B cell (primary cell): ENCODE measurements at regions of chr19 and their contacts with region 1.

Region 1: DNA sequence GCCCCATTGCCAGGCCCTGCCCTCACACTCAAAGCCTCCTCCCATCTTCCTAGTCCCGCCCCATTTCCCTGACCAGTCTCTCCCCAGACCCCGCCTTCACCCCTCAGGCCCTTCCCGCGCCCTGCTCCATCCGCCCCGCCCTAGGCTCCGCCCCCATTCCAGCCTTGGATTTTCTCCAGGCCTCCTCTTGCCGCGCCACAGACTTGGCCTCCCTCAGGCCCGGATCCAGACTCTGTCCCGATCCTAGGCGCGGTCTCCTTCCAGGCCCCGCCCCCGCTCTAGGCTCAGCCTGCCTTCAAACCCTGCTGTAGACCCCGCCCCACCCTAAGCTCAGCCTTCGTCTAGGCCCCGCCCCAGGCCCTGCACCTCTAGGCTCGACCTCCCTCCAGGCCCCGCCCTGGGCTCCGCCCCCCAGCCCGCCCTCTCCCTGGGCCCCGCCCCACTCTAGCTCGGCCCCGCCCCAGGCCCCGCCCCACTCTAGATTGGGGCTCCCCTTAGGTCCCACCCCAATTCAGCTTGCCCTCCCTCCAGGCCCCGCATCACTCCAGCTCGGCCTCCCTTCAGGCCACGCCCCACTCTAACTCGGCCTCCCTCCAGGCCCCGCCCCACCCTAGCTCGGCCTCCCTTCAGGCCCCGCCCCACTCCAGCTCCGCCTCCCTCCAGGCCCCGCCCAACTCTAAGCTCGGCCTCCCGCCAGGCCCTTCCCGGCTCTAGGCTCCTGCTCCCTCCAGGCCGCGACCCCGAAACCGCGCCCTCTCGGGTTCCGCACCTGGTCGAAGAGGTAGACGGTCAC is 18.5 kb downstream of the LMTK3 start:
- DNase-seq: peak; percentile 82
- ATAC-seq: peak; percentile 69
- H3K4me3 ChIP-seq: peak overlapping the region in 4 of 5 experiments; percentile 22 to 56 (median 48)
- H3K4me3 Mint-ChIP-seq: peak overlapping the region; percentile 69
- H3K27ac ChIP-seq: no peak overlapping the region
- H3K27ac Mint-ChIP-seq: no peak overlapping the region
- H3K4me1 ChIP-seq: peaks cover 51 to 53% of the 10 kb centered on the region in 2 donors
- H3K4me1 Mint-ChIP-seq: peaks cover 35% of the 10 kb centered on the region
- H3K27me3 ChIP-seq: peaks cover 0 to 57% (median 28%) of the 10 kb centered on the region in 4 experiments
- H3K27me3 Mint-ChIP-seq: peaks cover 35% of the 10 kb centered on the region
- CTCF ChIP-seq: no peak

Region 2: GRCh38 chr19:48085904-48086864 is 406.9 kb before region 1 on chr19:
- CTCF ChIA-PET with region 1: no interaction called
- POLR2A ChIA-PET with region 1: no interaction called
- intact Hi-C with region 1: no loop called
- DNase-seq: no peak
- ATAC-seq: no peak
- H3K4me3 ChIP-seq: no peak overlapping the region
- H3K4me3 Mint-ChIP-seq: no peak overlapping the region
- H3K27ac ChIP-seq: no peak overlapping the region
- H3K27ac Mint-ChIP-seq: no peak overlapping the region
- H3K4me1 ChIP-seq: no peaks in the 10 kb centered on the region
- H3K4me1 Mint-ChIP-seq: peaks cover 2% of the 10 kb centered on the region
- H3K27me3 ChIP-seq: no peaks in the 10 kb centered on the region
- H3K27me3 Mint-ChIP-seq: peaks cover 10% of the 10 kb centered on the region
- CTCF ChIP-seq: no peak

Region 3: DNA sequence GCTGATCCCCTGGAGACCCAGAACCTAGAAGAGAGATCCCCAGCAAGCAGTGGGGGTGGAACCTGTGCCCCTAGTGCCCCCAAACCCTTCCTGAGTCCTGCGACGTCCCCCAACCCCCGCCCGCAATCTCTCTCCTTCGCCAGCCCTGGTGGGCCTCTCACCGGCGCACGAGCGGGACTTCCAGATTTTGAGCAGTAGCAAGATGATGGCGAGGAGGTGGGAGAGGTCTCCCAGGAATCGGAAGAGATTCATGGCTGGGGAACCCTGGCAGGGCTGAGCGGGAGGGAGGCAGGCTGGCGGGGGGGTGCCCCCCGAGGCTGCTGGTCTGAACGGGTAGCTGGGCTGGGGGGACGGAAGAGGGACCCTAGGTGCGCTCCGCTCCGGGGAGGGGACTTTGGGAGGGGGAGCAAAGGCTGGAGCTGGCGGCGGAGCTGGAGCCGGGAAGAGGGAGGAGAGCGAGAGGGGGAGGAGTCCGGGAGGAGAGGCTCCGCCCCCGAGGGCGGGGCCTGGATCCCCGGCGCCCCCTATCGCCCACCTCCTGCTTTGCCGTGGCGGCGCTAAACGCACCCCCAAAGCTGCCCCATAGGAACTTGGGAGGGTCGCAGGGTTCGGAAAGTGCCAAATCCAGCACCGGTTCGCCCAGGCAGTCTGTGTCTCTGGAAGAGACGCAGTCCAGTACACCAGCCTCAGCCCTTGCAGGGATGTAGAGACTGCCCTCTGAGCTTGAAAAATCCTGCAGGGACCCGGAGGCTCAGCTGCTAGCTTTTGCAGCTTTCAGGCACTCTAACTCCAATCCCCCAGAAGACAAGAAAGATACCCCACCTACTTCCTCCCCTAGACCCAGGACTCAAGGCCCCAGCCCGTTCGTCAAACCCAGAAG is 101.8 kb before region 1 on chr19 and contains the start of gene KDELR1:
- CTCF ChIA-PET with region 1: interaction called, 3 read pairs
- POLR2A ChIA-PET with region 1: no interaction called
- intact Hi-C with region 1: loop called (anchors 10 kb)
- DNase-seq: peak; percentile 86
- ATAC-seq: peak; percentile 88
- H3K4me3 ChIP-seq: peak within 1 kb of the TSS; percentile 71 to 93 (median 85)
- H3K4me3 Mint-ChIP-seq: peak within 1 kb of the TSS; percentile 95
- H3K27ac ChIP-seq: peak within 1 kb of the TSS; percentile 79 to 80
- H3K27ac Mint-ChIP-seq: peak within 1 kb of the TSS; percentile 92
- H3K4me1 ChIP-seq: peaks cover 39 to 45% of the 10 kb centered on the region in 2 donors
- H3K4me1 Mint-ChIP-seq: peaks cover 24% of the 10 kb centered on the region
- H3K27me3 ChIP-seq: peaks cover 0 to 39% (median 23%) of the 10 kb centered on the region in 4 experiments
- H3K27me3 Mint-ChIP-seq: peaks cover 25% of the 10 kb centered on the region
- CTCF ChIP-seq: peak; percentile 88
- total RNA-seq, gene KDELR1: 60.5 and 62.7 TPM in 2 replicates

Region 4: DNA sequence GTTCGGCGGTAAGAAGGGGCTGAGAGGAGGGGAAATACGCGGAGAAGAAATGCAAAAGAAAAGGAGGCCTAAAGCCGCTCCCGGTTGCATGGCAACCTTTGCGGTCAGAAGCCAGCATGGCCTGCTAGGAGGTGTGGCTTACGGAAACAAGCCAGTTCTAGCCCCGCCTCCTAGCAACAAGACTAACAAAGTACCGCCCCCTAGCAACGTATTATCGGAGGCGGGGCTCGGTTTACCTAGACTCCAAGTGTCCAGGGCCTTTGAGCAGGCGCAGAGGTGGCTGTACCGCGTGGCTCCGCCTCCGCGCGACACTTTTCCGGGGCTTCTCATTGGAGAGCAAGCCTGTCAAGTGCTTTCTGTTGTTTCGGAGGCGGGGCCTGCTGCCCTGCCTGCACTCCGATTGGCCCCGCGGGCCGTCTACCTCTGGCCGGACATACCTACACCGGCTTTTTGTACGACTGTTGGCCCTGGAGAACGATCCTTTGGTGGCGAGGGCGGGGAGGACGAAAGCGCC is 24.3 kb before region 1 on chr19:
- CTCF ChIA-PET with region 1: interaction called, 6 read pairs
- POLR2A ChIA-PET with region 1: no interaction called
- intact Hi-C with region 1: loop called (anchors 1 kb)
- DNase-seq: peak; percentile 100
- ATAC-seq: peak; percentile 87
- H3K4me3 ChIP-seq: peak overlapping the region; percentile 8 to 90 (median 83)
- H3K4me3 Mint-ChIP-seq: peak overlapping the region; percentile 92
- H3K27ac ChIP-seq: peak overlapping the region; percentile 52 to 84
- H3K27ac Mint-ChIP-seq: peak overlapping the region; percentile 89
- H3K4me1 ChIP-seq: peaks cover 11 to 15% of the 10 kb centered on the region in 2 donors
- H3K4me1 Mint-ChIP-seq: peaks cover 17% of the 10 kb centered on the region
- H3K27me3 ChIP-seq: peaks cover 0 to 3% (median 0%) of the 10 kb centered on the region in 4 experiments
- H3K27me3 Mint-ChIP-seq: no peaks in the 10 kb centered on the region
- CTCF ChIP-seq: no peak

Region 5: DNA sequence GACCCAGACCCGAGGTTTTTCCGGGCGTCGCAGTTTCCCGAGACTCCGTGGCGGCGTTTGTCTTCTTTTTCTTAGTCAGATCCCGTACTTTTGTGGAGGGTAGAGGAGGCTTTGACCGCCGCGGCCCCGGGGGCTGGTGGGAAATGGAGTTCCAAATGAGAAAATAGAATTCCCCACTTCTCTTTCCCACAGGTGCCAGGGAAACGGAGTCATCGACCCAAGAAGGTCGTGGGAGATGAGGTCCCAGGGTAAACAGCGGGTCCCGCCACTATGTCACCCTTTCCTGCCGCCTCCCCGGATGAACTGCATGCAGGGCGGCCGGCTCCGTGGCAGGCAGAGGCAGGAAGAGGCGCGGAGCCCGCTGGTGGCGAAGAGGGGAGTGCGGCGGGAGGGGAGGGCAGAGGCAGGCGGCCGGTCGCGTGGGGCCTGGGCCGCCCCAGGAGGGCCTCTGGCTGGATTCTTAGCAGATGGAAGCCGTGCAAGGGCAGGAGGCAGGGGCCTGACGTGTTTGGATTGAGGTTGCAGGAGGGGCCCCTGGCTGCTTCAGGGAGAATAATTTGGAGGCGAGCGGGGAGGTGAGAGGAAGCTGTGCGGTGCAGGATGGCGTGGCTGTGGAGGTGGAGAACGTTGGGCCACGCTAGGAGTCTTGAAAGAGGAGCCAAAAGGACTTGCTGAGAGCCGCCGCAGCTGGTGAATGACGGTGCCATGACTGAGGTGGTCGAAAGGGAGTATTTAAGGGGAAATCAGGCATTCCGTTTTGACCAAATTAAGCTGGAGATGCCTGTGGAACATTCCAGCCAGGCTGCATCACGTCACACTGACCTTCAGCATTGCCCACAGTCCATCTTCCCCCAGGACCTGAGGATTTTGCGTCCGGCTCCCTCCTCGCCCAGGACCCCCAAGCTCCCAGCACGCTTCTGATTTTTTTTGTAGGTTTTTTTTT is 12.3 kb before region 1 on chr19:
- CTCF ChIA-PET with region 1: interaction called, 23 read pairs
- POLR2A ChIA-PET with region 1: no interaction called
- intact Hi-C with region 1: no loop called
- DNase-seq: peak; percentile 64
- ATAC-seq: peak; percentile 68
- H3K4me3 ChIP-seq: peak overlapping the region; percentile 43 to 74 (median 60)
- H3K4me3 Mint-ChIP-seq: peak overlapping the region; percentile 84
- H3K27ac ChIP-seq: peak overlapping the region in 1 of 2 donors; percentile 56
- H3K27ac Mint-ChIP-seq: peak overlapping the region; percentile 76
- H3K4me1 ChIP-seq: peaks cover 4 to 13% of the 10 kb centered on the region in 2 donors
- H3K4me1 Mint-ChIP-seq: peaks cover 16% of the 10 kb centered on the region
- H3K27me3 ChIP-seq: no peaks in the 10 kb centered on the region
- H3K27me3 Mint-ChIP-seq: no peaks in the 10 kb centered on the region
- CTCF ChIP-seq: no peak

Region 6: GRCh38 chr19:48513289-48514122 is 20.4 kb after region 1 on chr19:
- CTCF ChIA-PET with region 1: interaction called, 17 read pairs
- POLR2A ChIA-PET with region 1: no interaction called
- intact Hi-C with region 1: no loop called
- DNase-seq: peak; percentile 78
- ATAC-seq: peak; percentile 84
- H3K4me3 ChIP-seq: peak overlapping the region; percentile 21 to 82 (median 73)
- H3K4me3 Mint-ChIP-seq: no peak overlapping the region
- H3K27ac ChIP-seq: no peak overlapping the region
- H3K27ac Mint-ChIP-seq: no peak overlapping the region
- H3K4me1 ChIP-seq: peaks cover 28 to 30% of the 10 kb centered on the region in 2 donors
- H3K4me1 Mint-ChIP-seq: peaks cover 15% of the 10 kb centered on the region
- H3K27me3 ChIP-seq: peaks cover 0 to 37% (median 14%) of the 10 kb centered on the region in 4 experiments
- H3K27me3 Mint-ChIP-seq: peaks cover 15% of the 10 kb centered on the region
- CTCF ChIP-seq: no peak

Region 7: DNA sequence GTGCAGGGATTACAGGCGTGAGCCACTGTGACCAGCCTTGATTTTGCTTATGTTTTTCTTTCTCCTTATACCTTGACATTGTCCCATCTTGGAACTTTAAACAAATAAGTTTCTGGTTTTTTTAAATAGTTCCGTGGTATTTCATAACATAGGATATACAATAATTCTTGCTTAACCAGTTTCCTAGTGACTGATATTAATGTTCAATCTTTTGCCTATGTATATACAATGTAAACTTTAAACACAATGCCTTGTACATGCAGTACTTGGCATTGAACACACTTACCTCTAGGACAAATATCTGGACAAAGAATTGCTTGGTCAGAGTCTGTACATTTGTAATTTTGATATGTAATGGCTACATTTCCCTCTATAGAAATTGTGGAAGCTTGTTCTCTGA is 89.0 kb after region 1 on chr19:
- CTCF ChIA-PET with region 1: interaction called, 65 read pairs
- POLR2A ChIA-PET with region 1: interaction called, 4 read pairs
- intact Hi-C with region 1: loop called (anchors 1 kb)
- DNase-seq: no peak
- ATAC-seq: no peak
- H3K4me3 ChIP-seq: no peak overlapping the region
- H3K4me3 Mint-ChIP-seq: no peak overlapping the region
- H3K27ac ChIP-seq: no peak overlapping the region
- H3K27ac Mint-ChIP-seq: no peak overlapping the region
- H3K4me1 ChIP-seq: peaks cover 0 to 4% of the 10 kb centered on the region in 2 donors
- H3K4me1 Mint-ChIP-seq: peaks cover 4% of the 10 kb centered on the region
- H3K27me3 ChIP-seq: peaks cover 0 to 2% (median 0%) of the 10 kb centered on the region in 4 experiments
- H3K27me3 Mint-ChIP-seq: peaks cover 11% of the 10 kb centered on the region
- CTCF ChIP-seq: no peak

Region 8: GRCh38 chr19:48588670-48589399 is 95.7 kb after region 1 on chr19:
- CTCF ChIA-PET with region 1: interaction called, 65 read pairs
- POLR2A ChIA-PET with region 1: interaction called, 4 read pairs
- intact Hi-C with region 1: loop called (anchors 1 kb)
- DNase-seq: peak; percentile 89
- ATAC-seq: peak; percentile 91
- H3K4me3 ChIP-seq: peak overlapping the region in 4 of 5 experiments; percentile 14 to 56 (median 48)
- H3K4me3 Mint-ChIP-seq: peak overlapping the region; percentile 82
- H3K27ac ChIP-seq: no peak overlapping the region
- H3K27ac Mint-ChIP-seq: no peak overlapping the region
- H3K4me1 ChIP-seq: peaks cover 4 to 15% of the 10 kb centered on the region in 2 donors
- H3K4me1 Mint-ChIP-seq: peaks cover 12% of the 10 kb centered on the region
- H3K27me3 ChIP-seq: peaks cover 0 to 7% (median 4%) of the 10 kb centered on the region in 4 experiments
- H3K27me3 Mint-ChIP-seq: peaks cover 14% of the 10 kb centered on the region
- CTCF ChIP-seq: peak; percentile 94